Posterior vena cava (tissue), 2 donors: ENCODE measurements at regions of chr3 and their contacts with region 1.

Region 1: DNA sequence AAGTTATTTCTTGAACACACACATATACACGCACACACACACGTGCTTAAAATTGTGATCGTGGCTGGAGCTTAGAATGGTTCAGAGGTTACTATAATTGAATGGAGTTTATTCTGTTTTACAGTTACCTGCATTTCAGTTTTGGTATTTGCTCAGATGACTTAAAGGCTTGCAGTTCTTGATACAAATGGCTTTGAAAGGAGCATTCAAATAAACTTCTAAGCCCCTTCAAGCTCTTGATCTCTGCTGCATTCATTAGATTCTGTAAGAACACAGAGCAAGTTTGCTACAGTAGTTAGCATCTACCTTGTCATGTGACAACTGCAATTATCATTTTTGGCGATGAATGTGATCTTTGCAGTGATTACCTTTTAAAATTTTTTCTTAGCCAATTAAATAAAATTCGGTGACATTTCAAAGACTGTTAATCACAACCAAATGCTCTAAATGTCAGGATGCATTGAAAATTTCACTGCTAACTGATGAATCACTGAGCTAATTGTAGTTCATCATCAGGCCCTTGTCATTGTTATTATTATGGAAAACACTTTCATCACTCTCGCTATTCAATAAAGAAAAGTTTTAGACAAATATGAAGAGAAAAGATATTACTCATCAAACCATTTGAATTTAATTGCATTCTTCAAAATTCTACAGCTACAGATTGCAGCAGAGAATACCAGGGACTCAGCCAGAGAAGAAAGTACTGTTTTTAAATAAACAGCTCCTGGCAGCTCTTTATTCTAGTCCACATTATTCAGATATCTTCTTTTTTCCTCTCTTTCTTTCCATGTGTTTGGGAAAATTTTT is 296.1 kb downstream of the LRTM1 start:
- DNase-seq: no peak

Region 2: GRCh38 chr3:54681706-54682105 is 50.0 kb after region 1 on chr3:
- intact Hi-C with region 1: loop called in 1 of 2 experiments (anchors 2 kb)
- DNase-seq: no peak